ENCODE measurements at regions of chr17 and their contacts with region 1.

Region 1: DNA sequence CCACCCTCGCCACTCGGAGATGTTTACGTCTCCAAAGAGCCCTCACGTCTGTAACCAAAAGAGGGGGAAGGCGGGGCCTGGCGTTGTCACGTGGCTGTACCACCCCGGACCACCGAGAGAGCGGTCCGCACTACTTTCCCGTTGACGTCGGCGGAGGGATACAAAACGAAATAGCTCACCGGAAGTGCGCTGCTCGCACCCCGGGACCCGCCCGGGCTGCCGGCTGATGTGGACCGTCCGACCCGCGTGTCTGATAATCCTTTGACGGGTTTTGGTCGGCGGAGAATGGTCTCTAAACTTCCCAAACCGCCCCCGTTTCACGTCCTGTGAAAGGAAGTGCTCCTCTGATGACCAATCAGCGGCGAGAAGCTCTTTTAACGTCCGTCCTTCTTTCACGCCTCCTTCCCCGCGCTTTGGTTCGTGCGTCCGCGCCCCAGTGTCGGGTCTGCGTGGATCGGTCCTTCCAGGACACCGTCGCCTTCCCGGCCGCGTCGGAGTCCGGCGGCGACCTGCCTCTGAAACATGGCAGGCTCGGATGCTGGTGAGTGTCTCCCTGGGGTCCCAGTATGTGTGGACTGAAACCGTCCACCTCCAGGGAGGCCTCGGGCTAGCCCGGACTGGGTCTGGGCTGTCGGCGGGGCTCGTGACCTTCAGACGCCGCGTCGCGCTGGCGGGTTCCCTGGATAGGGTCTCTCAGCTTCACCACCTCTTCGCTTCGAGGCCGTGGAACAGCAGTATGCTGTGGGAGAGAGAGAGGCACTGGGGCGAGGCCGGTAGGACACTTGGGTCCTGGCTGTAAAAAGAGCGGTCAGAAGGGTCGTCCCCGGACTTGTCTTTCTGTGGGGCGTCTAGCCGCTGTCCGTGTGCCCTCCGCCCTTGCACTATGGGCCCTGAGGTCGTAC is at the start of gene CEP95:
- DNase-seq: peak in 3 of 5 donors; percentile 92 to 98 (median 97)
- H3K4me3 ChIP-seq: peak within 1 kb of the TSS; percentile 89 to 97
- H3K4me3 Mint-ChIP-seq: peak within 1 kb of the TSS; percentile 95 to 100 (median 100)
- H3K27ac ChIP-seq: peak within 1 kb of the TSS; percentile 98
- H3K27ac Mint-ChIP-seq: peak within 1 kb of the TSS; percentile 98 to 100 (median 100)
- H3K4me1 ChIP-seq: peaks cover 49% of the 10 kb centered on the region
- H3K4me1 Mint-ChIP-seq: peaks cover 43 to 75% (median 56%) of the 10 kb centered on the region in 4 donors
- H3K27me3 ChIP-seq: no peaks in the 10 kb centered on the region
- H3K27me3 Mint-ChIP-seq: peaks cover 0 to 4% of the 10 kb centered on the region in 2 donors
- total RNA-seq, gene CEP95: 105 to 108 TPM

Region 2: DNA sequence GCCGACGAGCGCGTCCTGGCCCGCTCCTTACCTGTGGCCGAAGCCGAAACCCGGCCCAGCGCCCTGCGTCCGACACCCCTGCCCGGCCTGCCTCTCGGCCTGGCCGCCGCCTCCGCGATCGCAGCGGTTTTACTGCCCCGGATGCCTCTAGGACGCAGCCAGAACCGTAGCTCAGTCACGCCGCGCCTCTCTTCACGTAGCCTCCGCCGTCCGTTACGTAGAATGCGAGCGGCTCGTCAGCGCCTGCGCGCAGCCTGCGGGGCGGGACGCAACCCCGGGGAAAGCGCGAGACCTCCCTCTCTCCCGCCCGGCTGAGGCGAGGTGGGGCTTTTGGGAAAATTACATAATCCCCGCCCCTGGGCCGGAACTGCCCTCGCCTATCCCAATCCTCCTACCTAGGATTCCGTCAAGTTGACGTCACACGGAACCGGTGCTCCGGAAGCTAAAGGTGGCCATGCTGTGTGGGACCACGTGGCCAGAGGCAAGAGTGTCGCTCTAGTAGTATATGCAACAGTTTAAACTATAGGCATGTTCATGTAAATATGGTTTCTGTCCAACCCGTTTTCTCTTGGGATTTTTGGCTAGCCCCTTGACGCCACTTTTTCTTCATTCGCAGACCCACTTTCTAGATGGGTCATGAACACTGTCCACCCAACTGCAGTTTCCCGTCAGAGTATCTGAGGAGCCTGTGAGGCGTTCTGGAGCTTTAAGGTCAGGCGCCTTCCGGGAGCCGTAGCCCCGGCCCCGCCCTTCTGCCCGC is 733.3 kb before region 1 on chr17 and contains the start of gene CCDC47:
- CTCF ChIA-PET with region 1: no interaction called
- POLR2A ChIA-PET with region 1: interaction called, 31 read pairs
- intact Hi-C with region 1: loop called (anchors 5 kb)
- DNase-seq: peak; percentile 99
- H3K4me3 ChIP-seq: peak within 1 kb of the TSS; percentile 87 to 97
- H3K4me3 Mint-ChIP-seq: peak within 1 kb of the TSS; percentile 91 to 100 (median 99)
- H3K27ac ChIP-seq: peak within 1 kb of the TSS; percentile 99
- H3K27ac Mint-ChIP-seq: peak within 1 kb of the TSS; percentile 99 to 100 (median 100)
- H3K4me1 ChIP-seq: peaks cover 66% of the 10 kb centered on the region
- H3K4me1 Mint-ChIP-seq: peaks cover 33 to 81% (median 52%) of the 10 kb centered on the region in 4 donors
- H3K27me3 ChIP-seq: no peaks in the 10 kb centered on the region
- H3K27me3 Mint-ChIP-seq: no peaks in the 10 kb centered on the region
- total RNA-seq, gene CCDC47: 36.7 to 39.0 TPM

Region 3: GRCh38 chr17:64262417-64263260 is 244.2 kb before region 1 on chr17 and contains the start of gene TEX2:
- CTCF ChIA-PET with region 1: no interaction called
- POLR2A ChIA-PET with region 1: interaction called, 11 read pairs
- intact Hi-C with region 1: no loop called
- DNase-seq: peak; percentile 70 to 86 (median 73)
- H3K4me3 ChIP-seq: peak within 1 kb of the TSS; percentile 76 to 79
- H3K4me3 Mint-ChIP-seq: peak within 1 kb of the TSS; percentile 91 to 98 (median 95)
- H3K27ac ChIP-seq: peak within 1 kb of the TSS; percentile 74
- H3K27ac Mint-ChIP-seq: peak within 1 kb of the TSS; percentile 93 to 98 (median 96)
- H3K4me1 ChIP-seq: peaks cover 33% of the 10 kb centered on the region
- H3K4me1 Mint-ChIP-seq: peaks cover 21 to 46% (median 34%) of the 10 kb centered on the region in 4 donors
- H3K27me3 ChIP-seq: no peaks in the 10 kb centered on the region
- H3K27me3 Mint-ChIP-seq: peaks cover 0 to 9% of the 10 kb centered on the region in 2 donors
- total RNA-seq, gene TEX2: 12.6 to 13.1 TPM

Region 4: GRCh38 chr17:64326395-64327054 is 180.3 kb before region 1 on chr17:
- CTCF ChIA-PET with region 1: no interaction called
- POLR2A ChIA-PET with region 1: no interaction called
- intact Hi-C with region 1: no loop called
- DNase-seq: no peak
- H3K4me3 ChIP-seq: no peak overlapping the region
- H3K4me3 Mint-ChIP-seq: no peak overlapping the region
- H3K27ac ChIP-seq: no peak overlapping the region
- H3K27ac Mint-ChIP-seq: peak overlapping the region in 1 of 7 donors; percentile 29
- H3K4me1 ChIP-seq: peaks cover 6% of the 10 kb centered on the region
- H3K4me1 Mint-ChIP-seq: peaks cover 0 to 4% (median under 1%) of the 10 kb centered on the region in 4 donors
- H3K27me3 ChIP-seq: no peaks in the 10 kb centered on the region
- H3K27me3 Mint-ChIP-seq: no peaks in the 10 kb centered on the region

Region 5: GRCh38 chr17:64406321-64407200 is 100.3 kb before region 1 on chr17:
- CTCF ChIA-PET with region 1: no interaction called
- POLR2A ChIA-PET with region 1: no interaction called
- intact Hi-C with region 1: no loop called
- DNase-seq: peak in 2 of 5 donors; percentile 10 to 23
- H3K4me3 ChIP-seq: no peak overlapping the region
- H3K4me3 Mint-ChIP-seq: no peak overlapping the region
- H3K27ac ChIP-seq: no peak overlapping the region
- H3K27ac Mint-ChIP-seq: peak overlapping the region in 1 of 7 donors; percentile 24
- H3K4me1 ChIP-seq: no peaks in the 10 kb centered on the region
- H3K4me1 Mint-ChIP-seq: peaks cover 4 to 6% (median 5%) of the 10 kb centered on the region in 4 donors
- H3K27me3 ChIP-seq: no peaks in the 10 kb centered on the region
- H3K27me3 Mint-ChIP-seq: no peaks in the 10 kb centered on the region

Region 6: DNA sequence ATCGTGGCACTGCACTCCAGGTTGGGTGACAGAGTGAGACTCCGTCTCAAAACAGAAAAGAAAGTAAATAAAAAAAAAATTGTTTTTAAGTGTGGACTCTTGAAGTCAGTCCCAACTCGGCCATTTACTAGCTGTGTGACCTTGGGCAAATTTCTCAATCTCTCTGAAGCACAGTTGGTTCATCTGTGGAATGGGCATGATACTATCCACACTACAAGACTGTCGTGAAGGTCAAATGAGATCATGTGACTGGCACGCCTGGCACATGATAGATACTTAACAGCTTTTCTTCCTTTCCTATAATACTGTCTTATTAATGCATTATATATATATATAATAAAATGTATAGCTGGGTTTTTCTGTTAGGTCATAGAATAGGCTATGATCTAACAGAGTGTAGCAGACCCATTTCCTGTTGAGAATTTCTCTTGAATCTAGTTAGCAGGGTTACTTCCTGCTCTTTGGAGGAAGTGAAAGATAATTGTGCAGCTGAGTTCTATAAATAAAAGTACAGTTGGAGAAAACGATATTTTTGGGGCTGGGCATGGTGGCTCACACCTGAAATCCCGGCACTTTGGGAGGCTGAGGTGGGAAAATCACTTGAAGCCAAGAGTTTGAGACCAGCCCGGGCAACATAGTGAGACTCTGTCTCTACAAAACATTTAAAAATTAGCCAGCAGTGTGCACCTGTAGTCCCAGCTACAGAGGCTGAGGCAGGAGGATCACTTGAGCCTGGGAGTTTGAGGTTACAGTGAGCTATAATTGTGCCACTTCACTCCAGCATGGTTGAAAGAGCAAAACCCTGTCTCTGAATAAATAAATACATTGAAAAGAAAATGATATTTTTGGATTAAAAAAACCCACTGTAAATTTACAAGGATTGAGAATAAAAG is 50.6 kb before region 1 on chr17:
- CTCF ChIA-PET with region 1: no interaction called
- POLR2A ChIA-PET with region 1: interaction called, 45 read pairs
- intact Hi-C with region 1: no loop called
- DNase-seq: peak in 3 of 5 donors; percentile 10 to 21 (median 19)
- H3K4me3 ChIP-seq: no peak overlapping the region
- H3K4me3 Mint-ChIP-seq: peak overlapping the region in 7 of 8 donors; percentile 32 to 67 (median 62)
- H3K27ac ChIP-seq: no peak overlapping the region
- H3K27ac Mint-ChIP-seq: peak overlapping the region in 6 of 7 donors; percentile 61 to 92 (median 85)
- H3K4me1 ChIP-seq: peaks cover 17% of the 10 kb centered on the region
- H3K4me1 Mint-ChIP-seq: peaks cover 8 to 23% (median 17%) of the 10 kb centered on the region in 4 donors
- H3K27me3 ChIP-seq: no peaks in the 10 kb centered on the region
- H3K27me3 Mint-ChIP-seq: no peaks in the 10 kb centered on the region

Region 7: DNA sequence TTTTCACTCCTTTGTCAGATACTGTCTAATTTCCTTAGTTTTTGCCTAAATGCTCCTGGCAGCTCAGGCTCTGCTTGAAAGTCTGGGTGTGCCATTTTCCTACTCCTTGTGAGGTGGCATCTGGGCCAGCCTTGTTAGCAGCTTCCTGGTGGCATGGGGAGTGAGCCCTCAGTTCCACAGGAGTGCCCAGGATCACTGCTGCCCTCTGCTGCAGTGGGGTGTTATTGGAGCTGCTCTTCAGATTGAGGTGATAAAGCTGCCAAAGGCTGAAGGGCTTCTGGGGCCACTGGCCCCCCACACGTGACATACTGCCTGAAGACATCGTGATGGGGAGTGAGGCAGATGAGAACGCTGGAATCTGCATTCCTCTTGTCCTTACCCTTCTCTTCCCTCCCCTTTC is 27.3 kb after region 1 on chr17:
- CTCF ChIA-PET with region 1: no interaction called
- POLR2A ChIA-PET with region 1: interaction called, 22 read pairs
- intact Hi-C with region 1: no loop called
- DNase-seq: no peak
- H3K4me3 ChIP-seq: no peak overlapping the region
- H3K4me3 Mint-ChIP-seq: no peak overlapping the region
- H3K27ac ChIP-seq: no peak overlapping the region
- H3K27ac Mint-ChIP-seq: peak overlapping the region in 3 of 7 donors; percentile 37 to 48 (median 43)
- H3K4me1 ChIP-seq: no peaks in the 10 kb centered on the region
- H3K4me1 Mint-ChIP-seq: peaks cover 0 to 2% (median 0%) of the 10 kb centered on the region in 4 donors
- H3K27me3 ChIP-seq: no peaks in the 10 kb centered on the region
- H3K27me3 Mint-ChIP-seq: no peaks in the 10 kb centered on the region

Region 8: GRCh38 chr17:64707019-64707591 is 200.3 kb after region 1 on chr17:
- CTCF ChIA-PET with region 1: no interaction called
- POLR2A ChIA-PET with region 1: interaction called, 15 read pairs
- intact Hi-C with region 1: no loop called
- DNase-seq: no peak
- H3K4me3 ChIP-seq: no peak overlapping the region
- H3K4me3 Mint-ChIP-seq: peak overlapping the region in 3 of 8 donors; percentile 22 to 43 (median 27)
- H3K27ac ChIP-seq: no peak overlapping the region
- H3K27ac Mint-ChIP-seq: peak overlapping the region in 3 of 7 donors; percentile 2 to 64 (median 12)
- H3K4me1 ChIP-seq: peaks cover 51% of the 10 kb centered on the region
- H3K4me1 Mint-ChIP-seq: peaks cover 40 to 54% (median 45%) of the 10 kb centered on the region in 4 donors
- H3K27me3 ChIP-seq: no peaks in the 10 kb centered on the region
- H3K27me3 Mint-ChIP-seq: no peaks in the 10 kb centered on the region

Measured in CD4-positive, alpha-beta memory T cell (primary cell).